ENCODE measurements at regions of chr12 and their contacts with region 1.

Region 1: GRCh38 chr12:111812881-111813741 is 28.9 kb upstream of the MAPKAPK5 start:
- DNase-seq: peak; percentile 72 to 88 (median 79)
- H3K4me3 ChIP-seq: no peak overlapping the region
- H3K27ac ChIP-seq: peak overlapping the region in 1 of 2 donors; percentile 8
- H3K4me1 ChIP-seq: no peaks in the 10 kb centered on the region
- H3K27me3 ChIP-seq: no peaks in the 10 kb centered on the region
- CTCF ChIP-seq: peak; percentile 82 to 91 (median 86)
- EP300 ChIP-seq: no peak
- POLR2A ChIP-seq: no peak

Region 2: GRCh38 chr12:111753144-111753881 is 59.8 kb before region 1 on chr12:
- intact Hi-C with region 1: loop called (anchors 2 to 5 kb)
- DNase-seq: peak; percentile 52 to 79 (median 70)
- H3K4me3 ChIP-seq: no peak overlapping the region
- H3K27ac ChIP-seq: no peak overlapping the region
- H3K4me1 ChIP-seq: peaks cover 3% of the 10 kb centered on the region
- H3K27me3 ChIP-seq: no peaks in the 10 kb centered on the region
- CTCF ChIP-seq: peak; percentile 75 to 80 (median 78)
- EP300 ChIP-seq: no peak
- POLR2A ChIP-seq: no peak

Region 3: GRCh38 chr12:111887926-111888745 is 75.0 kb after region 1 on chr12:
- intact Hi-C with region 1: no loop called
- DNase-seq: no peak
- H3K4me3 ChIP-seq: no peak overlapping the region
- H3K27ac ChIP-seq: no peak overlapping the region
- H3K4me1 ChIP-seq: no peaks in the 10 kb centered on the region
- H3K27me3 ChIP-seq: no peaks in the 10 kb centered on the region
- CTCF ChIP-seq: no peak
- EP300 ChIP-seq: no peak
- POLR2A ChIP-seq: no peak

Measured in ovary (tissue), 10 donors.